ENCODE measurements at regions of chr3 and their contacts with region 1.

Region 1: DNA sequence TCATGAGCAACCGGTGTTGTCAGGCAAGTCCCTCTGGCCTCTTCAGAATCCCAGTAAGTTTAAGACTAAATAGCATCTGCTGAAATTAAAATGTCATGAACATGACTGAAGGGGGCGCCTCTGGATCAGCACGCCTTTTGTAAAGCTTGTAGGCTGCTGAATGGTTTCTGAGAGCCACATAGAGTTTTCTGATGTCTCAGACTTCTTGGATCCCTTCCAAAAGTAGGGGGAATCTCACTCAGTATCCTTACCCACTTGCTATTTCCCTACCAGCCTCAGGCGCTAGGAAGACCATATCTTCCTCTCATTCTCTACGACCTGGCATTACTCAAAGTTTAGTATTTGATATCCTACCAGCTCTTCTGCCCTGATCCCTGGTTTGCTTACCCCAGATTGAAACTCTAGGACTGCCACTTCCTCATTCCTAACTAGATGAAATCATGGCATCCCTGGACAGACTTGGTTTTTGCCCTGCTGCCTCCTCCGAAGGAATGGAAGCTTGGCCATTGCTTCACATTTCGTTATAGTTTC is 62.7 kb upstream of the CD47 start:
- H3K4me3 ChIP-seq: no peak overlapping the region
- H3K27ac ChIP-seq: no peak overlapping the region
- H3K4me1 ChIP-seq: no peaks in the 10 kb centered on the region
- CTCF ChIP-seq: no peak

Region 2: GRCh38 chr3:108164391-108164790 is 10.9 kb after region 1 on chr3:
- CTCF ChIA-PET with region 1: interaction called, 12 read pairs
- POLR2A ChIA-PET with region 1: no interaction called
- H3K4me3 ChIP-seq: no peak overlapping the region
- H3K27ac ChIP-seq: no peak overlapping the region
- H3K4me1 ChIP-seq: no peaks in the 10 kb centered on the region
- CTCF ChIP-seq: no peak

Region 3: GRCh38 chr3:108477511-108478147 is 324.1 kb after region 1 on chr3:
- CTCF ChIA-PET with region 1: interaction called, 17 read pairs
- POLR2A ChIA-PET with region 1: no interaction called
- H3K4me3 ChIP-seq: no peak overlapping the region
- H3K27ac ChIP-seq: no peak overlapping the region
- H3K4me1 ChIP-seq: no peaks in the 10 kb centered on the region
- CTCF ChIP-seq: 0 out of 2 replicates have a peak, but pooled peaks have one; percentile 26